ENCODE measurements at regions of chr6 and their contacts with region 1.

Region 1: GRCh38 chr6:34414999-34415858 is 10.6 kb downstream of the RPS10 start:
- DNase-seq: peak in 1 of 2 experiments; percentile 60
- H3K4me3 ChIP-seq: no peak overlapping the region
- H3K27ac ChIP-seq: no peak overlapping the region
- H3K4me1 ChIP-seq: no peaks in the 10 kb centered on the region
- H3K27me3 ChIP-seq: no peaks in the 10 kb centered on the region
- CTCF ChIP-seq: peak; percentile 54

Region 2: GRCh38 chr6:34189806-34190503 is 225.3 kb before region 1 on chr6:
- CTCF ChIA-PET with region 1: interaction called, 12 read pairs
- POLR2A ChIA-PET with region 1: no interaction called
- intact Hi-C with region 1: no loop called
- DNase-seq: no peak
- H3K4me3 ChIP-seq: no peak overlapping the region
- H3K27ac ChIP-seq: no peak overlapping the region
- H3K4me1 ChIP-seq: no peaks in the 10 kb centered on the region
- H3K27me3 ChIP-seq: no peaks in the 10 kb centered on the region
- CTCF ChIP-seq: no peak

Region 3: GRCh38 chr6:34196126-34196830 is 219.0 kb before region 1 on chr6:
- CTCF ChIA-PET with region 1: interaction called, 6 read pairs
- POLR2A ChIA-PET with region 1: interaction called, 5 read pairs
- intact Hi-C with region 1: loop called (anchors 1 kb)
- DNase-seq: peak; percentile 38 to 82
- H3K4me3 ChIP-seq: peak overlapping the region; percentile 55
- H3K27ac ChIP-seq: no peak overlapping the region
- H3K4me1 ChIP-seq: peaks cover 11% of the 10 kb centered on the region
- H3K27me3 ChIP-seq: no peaks in the 10 kb centered on the region
- CTCF ChIP-seq: peak; percentile 94

Region 4: DNA sequence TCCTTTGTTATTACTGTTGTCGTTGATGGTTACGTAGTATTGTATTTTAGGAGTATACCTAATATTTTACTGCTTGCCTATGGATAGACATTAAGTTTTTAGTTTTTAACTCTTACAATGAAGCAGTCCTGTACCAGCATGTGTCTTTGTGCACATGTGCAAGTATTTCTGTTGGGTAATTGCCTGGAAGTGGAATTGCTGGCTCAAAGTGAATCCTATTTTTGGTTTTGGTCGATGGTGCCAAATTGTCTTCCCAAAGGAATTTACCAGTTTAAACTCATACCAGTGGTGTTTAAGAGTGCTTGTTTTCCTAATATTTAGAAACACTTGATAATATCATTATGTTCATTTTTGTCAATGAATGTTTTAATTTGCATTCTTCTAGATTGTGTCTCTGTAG is 549.3 kb after region 1 on chr6:
- CTCF ChIA-PET with region 1: no interaction called
- POLR2A ChIA-PET with region 1: interaction called, 45 read pairs
- intact Hi-C with region 1: no loop called
- DNase-seq: no peak
- H3K4me3 ChIP-seq: no peak overlapping the region
- H3K27ac ChIP-seq: no peak overlapping the region
- H3K4me1 ChIP-seq: no peaks in the 10 kb centered on the region
- H3K27me3 ChIP-seq: no peaks in the 10 kb centered on the region
- CTCF ChIP-seq: no peak

Measured in PC-9 (cell line).